ENCODE measurements at regions of chr2 and their contacts with region 1.

Region 1: GRCh38 chr2:208033758-208034502 is 8.6 kb upstream of the PLEKHM3 start:
- DNase-seq: peak; percentile 69
- ATAC-seq: peak; percentile 93
- H3K4me3 ChIP-seq: no peak overlapping the region
- H3K27ac ChIP-seq: no peak overlapping the region
- H3K4me1 ChIP-seq: peaks cover 4% of the 10 kb centered on the region
- H3K27me3 ChIP-seq: no peaks in the 10 kb centered on the region
- CTCF ChIP-seq: peak; percentile 52

Region 2: GRCh38 chr2:207746131-207746530 is 287.8 kb before region 1 on chr2:
- intact Hi-C with region 1: loop called (anchors 10 kb)
- DNase-seq: no peak
- ATAC-seq: peak; percentile 91
- H3K4me3 ChIP-seq: no peak overlapping the region
- H3K27ac ChIP-seq: no peak overlapping the region
- H3K4me1 ChIP-seq: no peaks in the 10 kb centered on the region
- H3K27me3 ChIP-seq: no peaks in the 10 kb centered on the region
- CTCF ChIP-seq: peak; percentile 86

Region 3: GRCh38 chr2:207762146-207762545 is 271.8 kb before region 1 on chr2:
- intact Hi-C with region 1: no loop called
- DNase-seq: no peak
- ATAC-seq: no peak
- H3K4me3 ChIP-seq: no peak overlapping the region
- H3K27ac ChIP-seq: no peak overlapping the region
- H3K4me1 ChIP-seq: peaks cover 8% of the 10 kb centered on the region
- H3K27me3 ChIP-seq: no peaks in the 10 kb centered on the region
- CTCF ChIP-seq: no peak

Region 4: GRCh38 chr2:208175069-208175839 is 141.3 kb after region 1 on chr2:
- intact Hi-C with region 1: no loop called
- DNase-seq: no peak
- ATAC-seq: peak; percentile 96
- H3K4me3 ChIP-seq: no peak overlapping the region
- H3K27ac ChIP-seq: no peak overlapping the region
- H3K4me1 ChIP-seq: peaks cover 3% of the 10 kb centered on the region
- H3K27me3 ChIP-seq: no peaks in the 10 kb centered on the region
- CTCF ChIP-seq: peak; percentile 93